Heart right ventricle (tissue), 16 donors: ENCODE measurements at regions of chr6 and their contacts with region 1.

Region 1: DNA sequence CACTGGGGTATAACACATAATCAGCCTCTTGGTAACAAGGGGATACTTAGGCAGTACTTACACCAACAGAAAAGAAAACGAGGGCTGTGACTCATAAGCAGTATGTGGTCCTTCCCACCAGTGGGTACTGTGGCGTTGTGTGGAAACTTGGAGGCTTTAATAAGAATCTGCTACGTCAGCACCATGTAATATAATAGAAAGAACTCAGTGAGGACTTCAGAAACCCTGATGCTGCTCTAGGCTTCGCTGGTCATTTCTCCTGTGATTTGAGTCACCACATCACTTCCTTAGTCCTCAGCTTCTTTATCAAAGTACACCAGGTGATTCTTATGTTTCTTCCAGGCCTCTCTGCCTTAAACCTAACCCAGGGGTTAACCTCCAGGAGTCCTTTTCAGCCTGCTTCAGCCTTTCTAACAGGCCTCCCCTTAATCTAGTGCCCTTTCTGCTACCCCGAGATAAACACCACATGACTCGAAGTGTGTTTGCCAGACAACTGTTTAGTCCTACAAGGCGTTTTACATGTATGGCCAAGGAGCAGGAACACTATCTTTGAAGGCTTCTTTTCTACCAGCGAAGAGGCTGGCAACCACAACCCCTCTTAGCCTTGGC is 68.5 kb downstream of the FYN start:
- DNase-seq: no peak
- ATAC-seq: peak; percentile 36 to 74 (median 62)
- H3K4me3 ChIP-seq: no peak overlapping the region
- H3K27ac ChIP-seq: peak overlapping the region in 8 of 10 donors; percentile 20 to 80 (median 57)
- H3K4me1 ChIP-seq: peaks cover 6 to 72% (median 48%) of the 10 kb centered on the region in 9 donors
- H3K27me3 ChIP-seq: no peaks in the 10 kb centered on the region
- CTCF ChIP-seq: peak in 3 of 9 donors; percentile 15 to 36 (median 33)

Region 2: GRCh38 chr6:111692327-111693164 is 112.2 kb before region 1 on chr6:
- intact Hi-C with region 1: no loop called
- DNase-seq: peak in 1 of 2 donors; percentile 62
- ATAC-seq: peak; percentile 30 to 82 (median 73)
- H3K4me3 ChIP-seq: no peak overlapping the region
- H3K27ac ChIP-seq: peak overlapping the region in 5 of 10 donors; percentile 3 to 43 (median 25)
- H3K4me1 ChIP-seq: peaks cover 0 to 31% (median 17%) of the 10 kb centered on the region in 9 donors
- H3K27me3 ChIP-seq: no peaks in the 10 kb centered on the region
- CTCF ChIP-seq: no peak

Region 3: DNA sequence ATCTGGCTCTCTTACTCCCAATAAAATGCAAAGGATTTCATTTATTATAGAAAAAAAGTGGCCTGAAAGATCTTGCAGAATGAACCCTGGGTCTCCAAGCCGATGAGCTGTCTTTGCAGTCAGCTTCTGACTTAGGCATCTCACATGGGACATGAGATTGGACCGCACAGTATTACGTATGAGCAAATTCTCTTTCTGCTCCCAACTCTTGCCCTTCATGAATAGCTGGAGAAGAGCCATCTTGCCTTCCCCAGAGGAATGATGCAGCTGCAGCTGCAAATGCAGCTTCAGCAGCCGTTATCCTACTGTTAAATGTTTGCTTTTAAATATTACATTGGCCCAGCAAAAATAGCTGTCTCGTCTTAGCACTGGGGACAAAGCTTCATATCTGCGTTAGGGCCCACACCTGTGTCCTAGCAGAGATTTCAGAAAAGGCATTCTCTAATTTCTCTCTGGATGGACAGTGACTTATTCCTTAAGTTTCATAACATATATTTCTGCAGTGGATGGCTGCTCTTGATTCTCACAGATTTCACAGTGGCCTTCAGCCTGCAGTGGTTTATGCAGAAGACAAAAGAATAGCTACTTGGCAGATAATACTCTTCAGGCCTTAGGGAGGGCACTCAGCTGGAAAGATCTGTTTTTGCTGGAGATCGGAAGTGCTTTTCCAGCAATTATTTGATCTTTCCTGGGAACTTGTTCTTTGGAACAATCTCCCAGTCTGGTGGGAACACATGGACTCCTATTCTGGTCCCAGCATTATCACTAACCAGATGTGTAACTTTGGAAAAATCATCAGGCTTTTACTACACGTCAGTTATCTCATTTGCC is 60.7 kb before region 1 on chr6:
- intact Hi-C with region 1: loop called in 2 of 10 experiments (anchors 5 kb)
- DNase-seq: peak in 1 of 2 donors; percentile 88
- ATAC-seq: peak; percentile 85 to 91 (median 89)
- H3K4me3 ChIP-seq: peak overlapping the region in 1 of 10 donors; percentile 0
- H3K27ac ChIP-seq: peak overlapping the region; percentile 37 to 79 (median 72)
- H3K4me1 ChIP-seq: peaks cover 9 to 98% (median 85%) of the 10 kb centered on the region in 9 donors
- H3K27me3 ChIP-seq: no peaks in the 10 kb centered on the region
- CTCF ChIP-seq: no peak

Region 4: DNA sequence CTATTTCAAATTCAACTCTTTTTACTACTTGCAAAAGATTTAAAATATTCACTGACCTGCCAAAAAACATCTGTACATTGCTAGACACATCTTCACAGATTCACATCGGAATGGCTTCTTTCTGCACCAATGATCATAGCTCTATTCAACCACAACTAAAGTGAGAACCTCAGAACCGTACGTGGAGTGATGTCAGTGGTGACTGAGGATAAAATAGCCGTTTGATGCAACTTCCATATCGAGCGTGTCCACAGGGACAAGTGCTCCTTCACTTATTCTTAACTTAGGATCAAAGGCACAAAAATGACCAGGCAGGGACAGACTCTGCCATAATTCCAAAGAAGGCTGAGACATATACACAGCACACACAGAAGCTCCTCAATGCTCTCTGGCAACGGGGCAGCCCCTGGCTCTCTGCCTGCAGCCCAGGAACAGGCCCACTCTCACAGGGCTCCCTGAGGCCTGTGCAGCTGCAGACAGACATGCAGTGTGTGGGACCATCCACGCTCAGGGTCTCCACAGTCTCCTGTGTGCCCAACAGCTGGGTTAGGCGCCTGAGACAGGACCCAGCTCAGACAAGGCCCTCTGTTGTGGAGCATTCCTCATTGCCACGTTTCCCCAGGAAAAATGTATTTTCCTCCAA is 45.7 kb after region 1 on chr6:
- intact Hi-C with region 1: loop called in 1 of 10 experiments (anchors 5 kb)
- DNase-seq: peak in 1 of 2 donors; percentile 57
- ATAC-seq: peak; percentile 27 to 72 (median 52)
- H3K4me3 ChIP-seq: no peak overlapping the region
- H3K27ac ChIP-seq: peak overlapping the region in 4 of 10 donors; percentile 12 to 45 (median 33)
- H3K4me1 ChIP-seq: peaks cover 9 to 100% (median 91%) of the 10 kb centered on the region in 9 donors
- H3K27me3 ChIP-seq: no peaks in the 10 kb centered on the region
- CTCF ChIP-seq: no peak